ENCODE measurements at regions of chr14 and their contacts with region 1.

Region 1: DNA sequence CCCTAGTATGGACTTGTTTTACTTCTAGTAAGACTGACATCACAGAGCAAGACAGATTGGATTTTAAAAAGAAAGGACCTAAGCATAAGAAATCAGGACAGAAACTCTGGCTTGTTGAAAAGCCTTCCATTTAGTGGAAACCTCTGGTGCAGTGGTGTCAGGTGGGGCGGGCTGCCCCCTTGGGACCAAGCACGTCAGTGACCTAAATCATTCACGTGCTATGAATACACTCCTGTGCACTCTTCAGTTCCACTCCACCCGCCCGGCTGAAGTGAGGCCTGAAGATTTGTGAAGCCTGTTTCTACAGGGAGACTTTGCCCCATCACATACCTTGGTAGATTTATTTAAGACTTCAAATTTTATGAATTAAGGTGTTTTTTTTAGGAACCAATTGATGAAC is 58.2 kb upstream of the STRN3 start:
- DNase-seq: no peak
- H3K4me3 ChIP-seq: no peak overlapping the region
- H3K4me3 Mint-ChIP-seq: no peak overlapping the region
- H3K27ac ChIP-seq: no peak overlapping the region
- H3K27ac Mint-ChIP-seq: no peak overlapping the region
- H3K4me1 ChIP-seq: no peaks in the 10 kb centered on the region
- H3K4me1 Mint-ChIP-seq: no peaks in the 10 kb centered on the region
- H3K27me3 ChIP-seq: no peaks in the 10 kb centered on the region
- H3K27me3 Mint-ChIP-seq: no peaks in the 10 kb centered on the region

Region 2: GRCh38 chr14:30974628-30975027 is 109.8 kb before region 1 on chr14:
- CTCF ChIA-PET with region 1: interaction called, 14 read pairs
- POLR2A ChIA-PET with region 1: no interaction called
- DNase-seq: no peak
- H3K4me3 ChIP-seq: no peak overlapping the region
- H3K4me3 Mint-ChIP-seq: no peak overlapping the region
- H3K27ac ChIP-seq: no peak overlapping the region
- H3K27ac Mint-ChIP-seq: no peak overlapping the region
- H3K4me1 ChIP-seq: peaks cover 5% of the 10 kb centered on the region
- H3K4me1 Mint-ChIP-seq: peaks cover 65 to 82% (median 80%) of the 10 kb centered on the region in 3 donors
- H3K27me3 ChIP-seq: no peaks in the 10 kb centered on the region
- H3K27me3 Mint-ChIP-seq: no peaks in the 10 kb centered on the region

Region 3: DNA sequence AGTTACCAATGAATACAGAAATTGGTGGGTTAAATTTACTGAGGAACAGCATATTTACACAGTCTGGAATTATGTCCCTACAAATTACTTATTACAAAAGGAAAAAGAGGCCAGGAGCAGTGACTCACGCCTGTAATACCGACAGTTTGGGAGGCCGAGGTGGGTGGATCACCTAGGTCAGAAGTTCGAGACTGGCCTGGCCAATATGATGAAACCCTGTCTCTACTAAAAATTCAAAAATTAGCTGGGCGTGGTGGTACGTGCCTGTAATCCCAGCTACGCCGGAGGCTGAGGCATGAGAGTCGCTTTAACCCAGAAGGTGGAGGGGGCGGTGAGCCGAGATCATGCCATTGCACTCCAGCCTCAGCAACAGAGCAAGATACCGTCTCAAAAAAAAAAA is 70.6 kb after region 1 on chr14:
- CTCF ChIA-PET with region 1: no interaction called
- POLR2A ChIA-PET with region 1: no interaction called
- DNase-seq: no peak
- H3K4me3 ChIP-seq: no peak overlapping the region
- H3K4me3 Mint-ChIP-seq: no peak overlapping the region
- H3K27ac ChIP-seq: no peak overlapping the region
- H3K27ac Mint-ChIP-seq: no peak overlapping the region
- H3K4me1 ChIP-seq: no peaks in the 10 kb centered on the region
- H3K4me1 Mint-ChIP-seq: no peaks in the 10 kb centered on the region
- H3K27me3 ChIP-seq: no peaks in the 10 kb centered on the region
- H3K27me3 Mint-ChIP-seq: no peaks in the 10 kb centered on the region

Measured in CD8-positive, alpha-beta memory T cell (primary cell).